ENCODE measurements at regions of chr10 and their contacts with region 1.

Region 1: DNA sequence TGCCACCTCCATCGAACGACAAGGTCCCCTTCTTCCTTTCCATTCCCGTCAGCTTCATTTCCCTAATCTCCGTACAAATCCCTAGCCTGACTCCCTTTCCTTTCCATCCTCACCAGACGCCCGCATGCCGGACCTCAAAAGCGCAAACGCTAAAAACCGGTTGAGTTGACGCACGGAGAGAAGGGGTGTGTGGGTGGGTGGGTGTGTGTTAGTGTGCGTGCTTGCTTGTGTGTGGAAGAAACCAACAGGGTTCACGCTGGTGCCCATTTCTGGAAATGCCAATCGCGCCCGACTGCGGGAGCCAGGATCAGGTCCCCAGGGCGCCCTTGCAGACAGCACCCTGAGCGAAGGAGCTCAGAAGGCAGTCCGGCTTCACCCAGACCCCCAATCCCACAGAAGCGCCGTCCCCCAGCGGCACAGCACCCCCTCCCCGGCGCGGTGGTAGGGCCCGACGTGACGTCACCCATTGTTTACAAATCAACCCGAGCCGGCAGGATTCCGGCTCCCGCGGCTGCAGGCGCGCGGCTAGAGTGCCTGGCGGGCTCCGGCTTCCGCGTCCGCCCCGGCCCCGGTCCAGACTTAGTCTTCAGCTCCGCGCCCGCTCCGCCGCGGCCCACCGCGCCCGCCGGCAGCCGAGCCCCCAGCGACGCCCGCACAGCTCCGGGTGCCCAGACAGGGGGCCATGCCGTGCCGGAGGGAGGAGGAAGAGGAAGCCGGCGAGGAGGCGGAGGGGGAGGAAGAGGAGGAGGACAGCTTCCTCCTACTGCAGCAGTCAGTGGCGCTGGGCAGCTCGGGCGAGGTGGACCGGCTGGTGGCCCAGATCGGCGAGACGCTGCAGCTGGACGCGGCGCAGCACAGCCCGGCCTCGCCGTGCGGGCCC is at the start of gene FRAT1:
- DNase-seq: peak; percentile 91
- ATAC-seq: peak; percentile 70
- H3K4me3 Mint-ChIP-seq: peak within 1 kb of the TSS; percentile 83
- H3K27ac Mint-ChIP-seq: peak within 1 kb of the TSS; percentile 99
- H3K4me1 Mint-ChIP-seq: peaks cover 21% of the 10 kb centered on the region
- H3K27me3 Mint-ChIP-seq: peaks cover 2% of the 10 kb centered on the region
- CTCF ChIP-seq: no peak
- total RNA-seq, gene FRAT1: 3.0 to 3.2 TPM

Region 2: GRCh38 chr10:96524741-96525140 is 794.3 kb before region 1 on chr10:
- CTCF ChIA-PET with region 1: no interaction called
- POLR2A ChIA-PET with region 1: no interaction called
- intact Hi-C with region 1: no loop called
- DNase-seq: no peak
- ATAC-seq: no peak
- H3K4me3 Mint-ChIP-seq: no peak overlapping the region
- H3K27ac Mint-ChIP-seq: no peak overlapping the region
- H3K4me1 Mint-ChIP-seq: no peaks in the 10 kb centered on the region
- H3K27me3 Mint-ChIP-seq: no peaks in the 10 kb centered on the region
- CTCF ChIP-seq: no peak

Region 3: DNA sequence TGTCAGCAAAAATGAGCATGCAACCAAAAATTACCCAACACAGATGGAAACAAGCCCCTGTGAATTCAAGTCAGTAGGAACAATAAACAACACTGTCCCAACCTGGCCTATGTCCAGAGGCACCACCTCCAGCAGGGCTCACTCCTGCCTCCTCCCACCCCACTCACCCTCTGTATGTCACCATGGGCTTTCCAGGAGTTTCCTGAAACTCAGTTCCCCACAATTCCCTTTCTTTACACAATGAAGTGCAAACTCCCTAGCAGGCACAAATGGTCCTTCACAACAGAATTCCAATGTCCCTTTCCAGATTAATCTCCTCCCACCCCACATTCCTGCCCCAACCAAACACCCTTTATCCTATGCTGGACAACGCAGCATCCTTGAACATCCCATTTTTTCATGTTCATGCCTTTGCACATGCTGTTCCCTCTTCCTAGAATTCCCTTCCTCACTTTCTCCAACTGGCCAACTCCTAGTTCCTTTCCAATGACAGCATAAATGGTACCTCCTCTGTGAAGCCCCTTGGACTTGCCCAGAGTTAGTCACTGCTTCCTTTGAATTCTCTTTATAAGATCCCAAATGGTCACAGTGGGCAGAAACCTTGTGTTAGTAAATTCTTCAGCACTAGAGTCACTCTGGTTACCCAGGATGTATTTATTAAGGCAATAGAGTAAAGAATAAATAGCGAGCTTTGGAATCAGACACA is 290.7 kb before region 1 on chr10:
- CTCF ChIA-PET with region 1: no interaction called
- POLR2A ChIA-PET with region 1: no interaction called
- intact Hi-C with region 1: no loop called
- DNase-seq: no peak
- ATAC-seq: no peak
- H3K4me3 Mint-ChIP-seq: no peak overlapping the region
- H3K27ac Mint-ChIP-seq: no peak overlapping the region
- H3K4me1 Mint-ChIP-seq: peaks cover 5% of the 10 kb centered on the region
- H3K27me3 Mint-ChIP-seq: peaks cover 1% of the 10 kb centered on the region
- CTCF ChIP-seq: no peak

Region 4: DNA sequence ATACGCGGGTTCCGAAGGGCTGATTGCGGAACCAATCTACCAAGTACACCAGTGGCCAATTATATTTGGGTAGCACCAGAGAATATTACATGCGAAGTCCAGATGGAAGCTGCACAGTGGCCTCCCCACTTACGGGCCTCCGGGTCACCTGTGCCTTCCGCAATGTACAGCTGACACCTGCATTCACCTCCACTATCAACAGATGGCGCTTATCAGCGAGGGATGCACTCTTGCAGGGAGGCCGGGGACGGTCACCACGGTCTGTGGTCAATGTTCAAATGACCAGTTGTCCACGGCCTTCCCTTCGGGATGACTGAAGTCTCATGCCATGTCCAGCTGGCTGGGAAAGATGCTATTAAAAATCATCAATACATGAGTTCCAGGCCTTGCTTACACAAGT is 180.8 kb before region 1 on chr10:
- CTCF ChIA-PET with region 1: no interaction called
- POLR2A ChIA-PET with region 1: no interaction called
- intact Hi-C with region 1: no loop called
- DNase-seq: no peak
- ATAC-seq: no peak
- H3K4me3 Mint-ChIP-seq: no peak overlapping the region
- H3K27ac Mint-ChIP-seq: no peak overlapping the region
- H3K4me1 Mint-ChIP-seq: peaks cover 5% of the 10 kb centered on the region
- H3K27me3 Mint-ChIP-seq: peaks cover 17% of the 10 kb centered on the region
- CTCF ChIP-seq: peak; percentile 27

Region 5: DNA sequence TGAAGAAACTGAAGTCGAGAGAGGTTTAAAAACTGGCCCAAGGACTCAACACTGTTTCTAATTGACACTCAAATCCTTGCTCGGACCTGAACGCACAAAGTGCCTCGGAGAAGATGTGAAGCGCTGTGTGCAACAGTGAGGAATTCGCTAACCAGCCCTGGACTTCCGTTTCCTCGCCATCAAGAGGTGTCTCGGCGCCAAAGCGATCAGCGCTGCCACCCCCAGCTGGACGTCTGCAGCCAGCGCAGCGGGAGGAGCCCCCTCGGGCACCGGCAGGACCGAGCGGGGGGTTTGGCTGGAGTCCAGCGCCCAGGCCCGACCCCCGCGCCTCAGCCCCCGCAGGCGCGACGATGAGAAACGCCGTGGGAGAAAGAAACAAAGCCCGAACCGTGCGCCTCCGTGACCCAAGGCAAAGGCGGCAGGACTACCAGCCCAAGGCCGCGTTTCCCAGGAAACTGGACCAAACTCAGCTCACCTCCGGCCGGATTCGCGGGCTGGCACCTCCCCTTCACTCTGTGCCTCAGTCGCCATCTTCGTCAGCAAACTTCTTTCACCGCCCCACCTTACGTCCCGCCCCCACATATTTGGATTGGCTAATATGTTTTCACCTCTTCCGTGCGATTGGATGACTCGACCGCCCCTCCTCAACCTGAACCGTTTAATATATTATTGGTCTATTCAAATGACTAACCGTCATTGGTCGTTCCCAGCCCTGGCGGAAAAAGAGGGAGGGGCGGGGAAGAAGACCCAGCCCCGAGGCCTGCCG is 26.7 kb before region 1 on chr10 and contains the start of gene ARHGAP19:
- CTCF ChIA-PET with region 1: interaction called, 3 read pairs
- POLR2A ChIA-PET with region 1: interaction called, 17 read pairs
- intact Hi-C with region 1: no loop called
- DNase-seq: peak; percentile 98
- ATAC-seq: peak; percentile 99
- H3K4me3 Mint-ChIP-seq: peak within 1 kb of the TSS; percentile 88
- H3K27ac Mint-ChIP-seq: peak within 1 kb of the TSS; percentile 87
- H3K4me1 Mint-ChIP-seq: peaks cover 16% of the 10 kb centered on the region
- H3K27me3 Mint-ChIP-seq: peaks cover 2% of the 10 kb centered on the region
- CTCF ChIP-seq: no peak
- total RNA-seq, gene ARHGAP19: 42.3 to 53.2 TPM

Region 6: DNA sequence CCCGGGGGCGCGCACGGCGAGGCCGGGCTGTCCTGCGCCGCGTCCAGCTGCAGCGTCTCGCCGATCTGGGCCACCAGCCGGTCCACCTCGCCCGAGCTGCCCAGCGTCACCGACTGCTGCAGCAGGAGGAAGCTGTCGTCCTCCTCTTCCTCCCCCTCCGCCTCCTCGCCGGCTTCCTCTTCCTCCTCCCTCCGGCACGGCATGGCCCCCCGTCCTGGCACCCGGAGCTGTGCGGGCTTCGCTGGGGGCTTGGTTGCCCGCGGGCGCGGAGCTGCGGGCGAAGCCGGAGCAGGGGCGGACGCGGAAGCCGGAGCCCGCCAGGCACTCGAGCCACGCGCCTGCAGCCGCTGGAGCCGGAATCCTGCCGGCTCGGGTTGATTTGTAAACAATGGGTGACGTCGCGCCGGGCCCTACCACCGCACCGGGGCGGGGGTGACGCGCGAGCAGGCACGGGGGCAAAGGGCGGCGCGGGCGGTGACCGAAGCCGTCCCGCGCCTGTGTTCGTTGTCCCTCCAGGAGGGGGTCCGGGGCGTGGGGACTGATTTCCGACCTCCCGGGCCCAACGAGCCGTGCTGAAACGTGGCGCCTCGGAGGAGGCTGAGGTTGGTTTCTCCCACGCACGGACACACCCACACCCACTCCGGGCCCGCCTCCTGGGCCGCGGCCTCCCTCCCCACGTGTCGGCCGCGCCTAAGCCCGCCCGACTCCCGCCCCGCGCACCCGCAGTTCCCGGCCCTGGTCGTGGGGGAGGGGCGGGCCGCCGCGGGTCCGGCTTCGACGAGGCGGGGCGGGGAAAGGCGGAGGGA is 15.6 kb after region 1 on chr10 and contains the start of gene FRAT2:
- CTCF ChIA-PET with region 1: interaction called, 38 read pairs
- POLR2A ChIA-PET with region 1: interaction called, 82 read pairs
- intact Hi-C with region 1: no loop called
- DNase-seq: peak; percentile 90
- ATAC-seq: peak; percentile 82
- H3K4me3 Mint-ChIP-seq: peak within 1 kb of the TSS; percentile 77
- H3K27ac Mint-ChIP-seq: peak within 1 kb of the TSS; percentile 86
- H3K4me1 Mint-ChIP-seq: peaks cover 36% of the 10 kb centered on the region
- H3K27me3 Mint-ChIP-seq: no peaks in the 10 kb centered on the region
- CTCF ChIP-seq: no peak
- total RNA-seq, gene FRAT2: 5.6 to 6.4 TPM

Measured in activated CD8-positive, alpha-beta T cell treated with anti-CD3 and anti-CD28 coated beads for 36 hours (primary cell).